Psoas muscle (tissue), 8 donors: ENCODE measurements at regions of chrX and their contacts with region 1.

Region 1: GRCh38 chrX:153507484-153508178 is 9.8 kb upstream of the ATP2B3 start:
- DNase-seq: peak; percentile 82 to 89
- ATAC-seq: peak; percentile 86 to 98 (median 90)
- H3K4me3 ChIP-seq: no peak overlapping the region
- H3K27ac ChIP-seq: no peak overlapping the region
- H3K4me1 ChIP-seq: no peaks in the 10 kb centered on the region
- H3K27me3 ChIP-seq: peaks cover 0 to 18% (median 0%) of the 10 kb centered on the region in 3 donors
- CTCF ChIP-seq: peak; percentile 87

Region 2: DNA sequence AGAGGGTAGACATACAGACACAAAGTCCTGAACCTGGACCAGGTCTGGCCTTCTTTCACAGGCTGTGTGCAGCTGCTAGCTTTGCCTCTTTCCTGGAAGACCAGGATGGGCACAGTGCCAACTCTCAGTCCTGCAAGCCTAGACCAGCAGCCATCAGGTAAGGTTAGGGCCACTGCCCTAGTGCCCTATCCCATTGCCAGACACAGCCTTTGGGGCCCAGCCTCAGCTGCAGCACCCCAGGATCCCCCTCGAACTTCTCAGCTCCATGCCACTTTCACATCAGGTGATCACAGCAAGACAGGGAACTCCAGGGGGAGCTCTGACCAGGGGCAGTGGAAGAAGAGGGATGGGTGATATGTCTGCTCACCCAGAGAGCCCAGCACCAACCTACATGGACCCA is 571.3 kb before region 1 on chrX:
- intact Hi-C with region 1: no loop called
- DNase-seq: no peak
- ATAC-seq: no peak
- H3K4me3 ChIP-seq: no peak overlapping the region
- H3K27ac ChIP-seq: no peak overlapping the region
- H3K4me1 ChIP-seq: no peaks in the 10 kb centered on the region
- H3K27me3 ChIP-seq: peaks cover 0 to 11% (median 0%) of the 10 kb centered on the region in 3 donors
- CTCF ChIP-seq: no peak

Region 3: DNA sequence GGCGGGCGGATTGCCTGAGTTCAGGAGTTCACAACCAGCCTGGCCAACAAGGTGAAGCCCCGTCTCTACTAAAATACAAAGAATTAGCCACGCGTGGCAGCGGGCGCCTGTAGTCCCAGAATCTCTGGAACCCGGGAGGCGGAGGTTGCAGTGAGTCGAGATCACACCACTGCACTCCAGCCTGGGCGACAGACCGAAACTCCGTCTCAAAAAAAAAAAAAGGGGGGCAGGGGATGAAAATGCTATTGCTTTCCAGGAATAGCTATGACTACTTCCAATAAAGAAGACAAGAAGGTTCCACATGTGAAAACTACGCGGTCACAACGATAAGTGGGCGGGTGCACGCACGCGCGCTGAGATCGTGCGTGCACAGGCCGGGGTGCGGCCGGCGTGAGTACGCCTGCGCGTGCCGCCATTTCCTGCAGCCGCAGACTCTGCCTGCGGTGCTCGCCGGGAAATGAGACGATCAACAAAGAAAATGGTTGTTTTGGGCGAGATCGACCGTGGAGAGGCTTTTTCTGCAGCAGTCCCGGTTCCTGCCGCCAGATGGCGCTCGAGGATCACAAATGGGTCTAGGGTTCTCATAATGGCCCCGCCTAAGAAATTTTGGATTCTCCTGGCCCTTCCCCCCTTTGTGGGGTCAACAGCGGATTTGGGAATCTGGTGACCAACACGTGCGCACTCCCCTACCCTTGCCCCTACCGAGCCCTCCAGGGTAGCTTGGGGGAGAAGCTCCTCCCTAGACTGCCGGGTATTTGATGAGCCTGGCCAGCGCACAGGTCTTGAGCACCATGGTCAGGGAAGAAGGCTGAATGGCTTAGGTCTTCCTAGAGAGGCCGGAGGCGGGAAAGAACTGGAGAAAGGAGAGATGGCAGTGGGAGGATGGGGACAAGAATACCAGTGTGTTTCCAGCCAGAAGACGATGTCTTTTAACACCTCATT is 548.8 kb before region 1 on chrX:
- intact Hi-C with region 1: loop called in 1 of 2 experiments (anchors 10 kb)
- DNase-seq: peak; percentile 86 to 94
- ATAC-seq: peak; percentile 95 to 99 (median 98)
- H3K4me3 ChIP-seq: peak overlapping the region; percentile 61
- H3K27ac ChIP-seq: peak overlapping the region; percentile 71
- H3K4me1 ChIP-seq: no peaks in the 10 kb centered on the region
- H3K27me3 ChIP-seq: peaks cover 0 to under 1% (median 0%) of the 10 kb centered on the region in 3 donors
- CTCF ChIP-seq: peak; percentile 92

Region 4: GRCh38 chrX:153032397-153033118 is 475.1 kb before region 1 on chrX:
- intact Hi-C with region 1: loop called (anchors 5 kb)
- DNase-seq: peak; percentile 75 to 83
- ATAC-seq: peak; percentile 82 to 96 (median 88)
- H3K4me3 ChIP-seq: peak overlapping the region; percentile 31
- H3K27ac ChIP-seq: no peak overlapping the region
- H3K4me1 ChIP-seq: no peaks in the 10 kb centered on the region
- H3K27me3 ChIP-seq: no peaks in the 10 kb centered on the region
- CTCF ChIP-seq: peak; percentile 78

Region 5: DNA sequence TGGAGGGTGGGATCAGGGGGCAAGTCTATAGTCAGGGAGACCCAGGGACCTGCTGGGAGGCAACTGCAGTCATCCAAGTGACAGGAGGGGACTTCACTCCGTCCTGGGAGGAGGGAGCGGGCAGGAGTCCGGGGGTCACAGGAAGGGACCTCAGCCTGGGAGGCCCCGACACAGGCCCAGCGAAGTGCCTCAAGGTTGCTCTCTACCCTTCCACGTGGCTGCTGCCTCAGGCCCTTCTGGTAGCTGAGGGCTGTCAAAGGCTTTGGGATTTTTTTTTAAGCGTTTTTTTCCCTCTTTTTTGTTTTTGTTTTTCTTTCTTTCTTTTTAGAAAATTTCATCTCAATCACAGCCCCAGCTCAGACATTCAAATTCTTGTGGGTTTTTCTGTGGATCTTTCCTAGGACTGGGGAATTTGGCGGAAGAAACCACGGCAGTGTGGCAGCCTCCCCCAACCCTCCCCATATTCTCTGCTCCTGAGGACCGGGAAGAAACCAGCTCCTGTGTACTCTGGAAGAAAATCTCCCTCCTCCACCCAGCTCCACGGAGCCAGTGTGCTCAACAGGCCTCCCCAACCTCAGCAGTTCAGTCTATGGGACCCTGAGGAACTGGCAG is 35.9 kb before region 1 on chrX:
- intact Hi-C with region 1: loop called in 1 of 2 experiments (anchors 2 kb)
- DNase-seq: no peak
- ATAC-seq: no peak
- H3K4me3 ChIP-seq: no peak overlapping the region
- H3K27ac ChIP-seq: no peak overlapping the region
- H3K4me1 ChIP-seq: no peaks in the 10 kb centered on the region
- H3K27me3 ChIP-seq: peaks cover 0 to 13% (median 0%) of the 10 kb centered on the region in 3 donors
- CTCF ChIP-seq: no peak